ENCODE measurements at regions of chr20 and their contacts with region 1.

Region 1: GRCh38 chr20:32789896-32790750 is 27.9 kb downstream of the DNMT3B start:
- DNase-seq: peak; percentile 87
- ATAC-seq: peak; percentile 93

Region 2: DNA sequence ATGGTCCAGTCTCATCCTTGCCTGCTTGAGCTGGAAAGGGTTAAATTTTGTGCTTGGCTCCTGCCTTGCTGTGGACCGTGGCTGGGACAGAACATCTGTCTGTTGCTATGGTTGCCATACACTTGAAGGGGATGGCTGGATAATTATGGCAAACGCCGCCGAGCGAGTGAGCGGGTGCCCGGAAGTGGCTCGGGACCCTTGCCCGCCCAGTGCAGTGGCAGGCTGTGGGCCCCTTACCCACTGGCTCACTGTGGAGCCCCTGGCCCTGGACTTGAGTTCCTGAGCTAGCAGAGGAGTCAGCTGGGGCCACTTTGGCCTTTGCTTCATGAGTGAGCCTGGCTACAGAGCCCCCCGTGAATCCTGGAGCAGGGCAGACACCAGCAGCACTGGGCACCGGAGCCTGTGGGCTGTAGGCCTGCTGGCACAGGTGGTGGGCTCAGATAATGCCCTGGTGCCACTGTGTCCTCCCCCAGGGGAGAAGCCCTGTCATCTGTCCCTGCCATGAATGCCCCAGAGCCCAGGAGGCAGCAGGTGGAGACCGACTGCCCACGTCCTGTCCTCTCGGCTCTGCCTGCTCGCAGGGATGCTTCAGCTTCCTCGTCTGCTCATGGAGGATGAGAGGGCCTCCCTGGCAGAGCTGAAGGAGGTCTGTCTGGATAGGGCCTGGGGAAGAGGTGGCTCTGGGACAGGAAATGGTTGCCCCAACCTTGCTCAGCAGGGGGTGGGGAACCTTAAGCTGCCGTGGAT is 179.5 kb before region 1 on chr20:
- intact Hi-C with region 1: no loop called
- DNase-seq: no peak
- ATAC-seq: no peak

Region 3: DNA sequence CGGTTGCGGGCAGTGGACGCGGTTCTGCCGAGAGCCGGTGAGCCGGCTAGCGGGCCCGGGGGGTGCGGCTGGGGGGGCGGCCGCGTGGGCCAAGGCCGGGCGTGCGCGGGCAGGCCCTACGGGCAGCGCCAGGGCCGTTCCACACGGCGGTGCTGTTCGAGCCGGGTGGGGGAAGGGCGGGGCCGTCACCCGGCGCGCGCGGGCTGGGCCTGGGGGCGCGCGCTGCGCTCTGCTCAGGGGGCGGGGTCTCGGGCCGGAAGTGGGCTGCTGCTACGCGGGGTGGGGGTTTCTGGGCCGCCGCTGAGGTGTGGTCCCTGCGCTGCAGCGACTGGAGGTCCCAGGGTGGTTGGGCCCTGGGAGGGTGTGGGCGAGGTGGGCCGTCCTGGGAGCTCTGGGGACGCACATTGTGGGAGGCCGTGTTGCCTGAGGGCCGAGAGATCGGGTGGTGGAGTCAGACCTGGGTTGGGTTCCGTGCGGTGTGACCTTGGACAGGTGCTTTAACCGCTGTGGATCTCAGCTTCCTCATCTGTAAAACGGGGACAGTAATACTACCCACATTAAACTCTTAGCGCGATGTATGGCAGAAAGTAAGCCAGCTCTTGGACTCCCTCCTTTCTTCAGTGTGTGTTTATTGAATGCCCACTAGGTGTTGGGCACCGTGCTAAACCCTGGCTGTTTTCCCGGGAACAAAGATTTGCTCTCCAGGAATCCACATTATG is 30.0 kb after region 1 on chr20:
- intact Hi-C with region 1: no loop called
- DNase-seq: peak; percentile 78
- ATAC-seq: peak; percentile 76

Region 4: GRCh38 chr20:32894026-32894483 is 103.9 kb after region 1 on chr20:
- intact Hi-C with region 1: no loop called
- DNase-seq: no peak
- ATAC-seq: peak; percentile 17

Region 5: DNA sequence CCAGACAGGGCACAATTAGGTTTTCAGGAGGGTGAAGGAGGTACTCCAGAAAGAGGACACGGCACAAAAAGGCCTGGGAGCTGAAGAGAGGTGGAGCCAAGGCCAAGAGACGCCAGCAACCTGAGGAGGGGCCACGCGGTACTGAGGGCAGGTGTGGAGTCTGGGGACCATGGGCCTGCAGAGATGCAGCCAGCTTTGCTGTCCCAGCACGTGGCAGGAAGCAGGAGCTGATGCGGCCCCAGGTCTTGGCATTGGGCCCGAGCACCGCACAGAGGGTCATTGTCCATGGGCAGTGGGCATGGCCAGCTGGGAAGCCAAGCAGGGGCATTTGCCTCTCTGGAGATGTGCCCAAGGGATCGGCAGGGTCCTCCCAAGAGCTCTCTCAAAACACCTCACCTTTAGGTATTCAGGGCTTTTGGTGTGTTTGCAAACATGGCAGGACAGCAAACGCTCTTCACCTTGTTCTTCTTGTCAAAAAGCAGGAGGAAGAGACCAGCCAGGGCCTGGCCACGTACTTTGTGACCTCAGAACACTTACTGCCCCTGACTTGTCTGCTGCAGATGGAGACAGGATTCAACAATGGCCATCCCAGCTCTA is 491.5 kb after region 1 on chr20:
- intact Hi-C with region 1: loop called (anchors 10 kb)
- DNase-seq: no peak
- ATAC-seq: no peak

Measured in sciatic nerve (tissue), 2 donors.